ENCODE measurements at regions of chr12 and their contacts with region 1.

Region 1: DNA sequence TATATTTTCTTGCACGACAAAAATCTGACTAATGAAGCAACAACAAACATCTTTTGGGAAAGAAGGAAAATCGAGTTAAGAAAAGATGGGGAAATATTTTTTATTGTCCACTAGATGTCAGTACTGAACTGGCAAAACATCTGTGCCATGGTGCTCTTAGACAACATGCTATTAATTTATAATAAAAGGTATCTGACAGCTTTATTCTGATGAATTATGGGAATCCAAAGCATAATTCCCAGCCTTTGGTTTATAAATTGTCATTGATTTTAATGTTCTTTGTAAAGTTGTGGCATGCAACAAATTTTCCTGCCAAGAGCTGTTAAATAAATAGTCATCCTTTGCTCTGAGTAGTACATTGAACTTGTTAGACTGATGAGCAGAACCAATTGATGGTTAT is 231.2 kb downstream of the ETNK1 start:
- DNase-seq: no peak
- ATAC-seq: no peak
- H3K4me3 ChIP-seq: no peak overlapping the region
- H3K27ac ChIP-seq: no peak overlapping the region
- H3K4me1 ChIP-seq: no peaks in the 10 kb centered on the region
- H3K27me3 ChIP-seq: peaks cover 0 to 8% (median 3%) of the 10 kb centered on the region in 9 donors
- CTCF ChIP-seq: peak; percentile 38 to 72 (median 52)
- POLR2A ChIP-seq: no peak

Region 2: GRCh38 chr12:22610131-22610530 is 246.0 kb before region 1 on chr12:
- intact Hi-C with region 1: no loop called
- DNase-seq: no peak
- ATAC-seq: no peak
- H3K4me3 ChIP-seq: no peak overlapping the region
- H3K27ac ChIP-seq: no peak overlapping the region
- H3K4me1 ChIP-seq: no peaks in the 10 kb centered on the region
- H3K27me3 ChIP-seq: no peaks in the 10 kb centered on the region
- CTCF ChIP-seq: no peak
- POLR2A ChIP-seq: no peak

Region 3: DNA sequence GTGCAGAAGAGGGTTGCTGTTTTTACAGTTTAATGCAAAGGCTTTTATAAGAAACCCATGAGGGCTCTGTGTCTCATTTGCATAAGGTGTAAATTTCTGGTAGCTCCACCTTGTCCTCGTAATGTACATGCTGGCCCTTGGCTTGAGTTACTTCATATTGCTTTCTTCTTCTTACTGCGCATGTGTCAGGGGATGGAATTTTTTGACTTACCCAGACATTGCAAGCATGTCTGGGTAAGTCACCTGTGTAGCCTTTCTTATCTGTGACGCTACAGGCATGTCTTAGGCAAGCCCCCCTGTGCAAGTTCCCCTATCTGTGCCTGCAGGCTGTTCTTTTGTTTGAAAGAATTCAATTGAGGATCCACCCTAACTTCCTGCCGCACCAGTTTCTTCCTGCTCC is 43.0 kb after region 1 on chr12:
- intact Hi-C with region 1: no loop called
- DNase-seq: no peak
- ATAC-seq: no peak
- H3K4me3 ChIP-seq: no peak overlapping the region
- H3K27ac ChIP-seq: no peak overlapping the region
- H3K4me1 ChIP-seq: no peaks in the 10 kb centered on the region
- H3K27me3 ChIP-seq: no peaks in the 10 kb centered on the region
- CTCF ChIP-seq: no peak
- POLR2A ChIP-seq: no peak

Region 4: GRCh38 chr12:22981711-22982110 is 125.5 kb after region 1 on chr12:
- intact Hi-C with region 1: loop called in 2 of 10 experiments (anchors 5 to 10 kb)
- DNase-seq: no peak
- ATAC-seq: no peak
- H3K4me3 ChIP-seq: no peak overlapping the region
- H3K27ac ChIP-seq: no peak overlapping the region
- H3K4me1 ChIP-seq: no peaks in the 10 kb centered on the region
- H3K27me3 ChIP-seq: peaks cover 0 to 4% (median 0%) of the 10 kb centered on the region in 9 donors
- CTCF ChIP-seq: peak in 2 of 12 donors; percentile 6 to 24
- POLR2A ChIP-seq: no peak

Region 5: DNA sequence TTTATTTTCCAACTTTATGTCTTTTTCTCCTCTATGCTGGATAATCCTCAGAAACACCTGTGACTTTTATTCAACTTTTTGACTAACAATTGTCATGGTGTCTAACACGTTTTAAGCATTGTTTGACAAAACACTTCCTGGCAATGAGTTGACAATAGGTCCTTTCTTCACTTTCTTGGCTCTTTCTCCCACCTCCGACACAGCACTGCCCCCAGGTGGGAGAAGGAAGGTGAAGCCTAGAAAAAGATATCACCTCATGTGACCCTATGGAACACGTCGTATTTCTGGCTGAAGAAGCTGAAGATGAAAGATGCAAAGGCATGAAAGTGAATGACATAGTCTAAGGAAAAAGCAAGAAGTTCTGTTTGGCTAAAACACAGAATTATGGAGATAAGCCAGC is 198.8 kb after region 1 on chr12:
- intact Hi-C with region 1: loop called in 2 of 10 experiments (anchors 10 kb)
- DNase-seq: no peak
- ATAC-seq: no peak
- H3K4me3 ChIP-seq: no peak overlapping the region
- H3K27ac ChIP-seq: no peak overlapping the region
- H3K4me1 ChIP-seq: no peaks in the 10 kb centered on the region
- H3K27me3 ChIP-seq: no peaks in the 10 kb centered on the region
- CTCF ChIP-seq: peak in 7 of 12 donors; percentile 7 to 27 (median 20)
- POLR2A ChIP-seq: no peak

Measured in heart left ventricle (tissue), 16 donors.